ENCODE measurements at regions of chr16 and their contacts with region 1.

Region 1: DNA sequence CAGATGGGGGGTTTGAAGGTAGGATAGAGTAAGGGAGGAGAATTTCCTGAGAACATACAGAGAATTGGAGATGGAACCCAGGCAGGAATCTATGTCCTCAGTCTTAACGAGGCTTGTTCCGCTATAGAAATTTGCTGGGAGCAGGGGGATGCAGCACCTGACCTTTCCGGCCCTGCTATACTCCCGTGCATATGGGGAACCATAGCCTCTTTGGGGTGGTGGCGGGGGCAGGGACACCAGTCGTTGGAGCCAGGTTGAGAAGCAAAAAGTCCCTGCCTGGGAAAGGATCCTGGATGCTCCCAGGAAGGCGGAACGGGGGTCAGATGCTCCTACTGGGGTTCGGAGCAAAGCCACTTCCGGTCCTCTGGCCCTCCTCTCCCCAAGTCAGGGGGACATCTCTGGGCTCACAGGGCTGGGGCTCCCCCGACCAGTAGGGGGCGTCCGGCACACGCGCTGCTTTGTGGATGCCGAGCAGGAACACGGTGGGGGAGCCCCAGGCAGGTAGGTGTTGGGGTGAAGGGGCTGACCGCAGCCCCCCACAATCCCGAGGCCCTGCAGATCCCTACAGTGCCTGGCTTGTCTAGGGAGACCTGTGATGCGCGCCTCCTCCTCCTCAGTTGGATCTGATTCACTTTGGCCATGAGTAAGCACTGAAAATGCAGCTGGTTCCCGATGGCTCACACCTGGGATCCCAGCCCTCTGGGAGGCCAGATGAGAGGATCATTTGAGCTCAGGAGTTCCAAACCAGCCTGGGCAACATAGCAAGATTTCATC is 15.5 kb upstream of the TFAP4 start:
- DNase-seq: peak; percentile 84
- H3K4me3 ChIP-seq: no peak overlapping the region
- H3K27ac ChIP-seq: no peak overlapping the region
- H3K4me1 ChIP-seq: peaks cover 25% of the 10 kb centered on the region
- H3K27me3 ChIP-seq: no peaks in the 10 kb centered on the region
- CTCF ChIP-seq: peak; percentile 52 to 91

Region 2: GRCh38 chr16:4298761-4299522 is 10.6 kb after region 1 on chr16:
- CTCF ChIA-PET with region 1: interaction called, 3 read pairs
- dilution Hi-C with region 1: no loop called
- in situ Hi-C with region 1: no loop called
- intact Hi-C with region 1: loop called (anchors 1 kb)
- DNase-seq: peak; percentile 88
- H3K4me3 ChIP-seq: peak overlapping the region in 1 of 3 experiments; percentile 19
- H3K27ac ChIP-seq: peak overlapping the region; percentile 61
- H3K4me1 ChIP-seq: peaks cover 30% of the 10 kb centered on the region
- H3K27me3 ChIP-seq: no peaks in the 10 kb centered on the region
- CTCF ChIP-seq: peak in 1 of 2 donors; percentile 10

Region 3: DNA sequence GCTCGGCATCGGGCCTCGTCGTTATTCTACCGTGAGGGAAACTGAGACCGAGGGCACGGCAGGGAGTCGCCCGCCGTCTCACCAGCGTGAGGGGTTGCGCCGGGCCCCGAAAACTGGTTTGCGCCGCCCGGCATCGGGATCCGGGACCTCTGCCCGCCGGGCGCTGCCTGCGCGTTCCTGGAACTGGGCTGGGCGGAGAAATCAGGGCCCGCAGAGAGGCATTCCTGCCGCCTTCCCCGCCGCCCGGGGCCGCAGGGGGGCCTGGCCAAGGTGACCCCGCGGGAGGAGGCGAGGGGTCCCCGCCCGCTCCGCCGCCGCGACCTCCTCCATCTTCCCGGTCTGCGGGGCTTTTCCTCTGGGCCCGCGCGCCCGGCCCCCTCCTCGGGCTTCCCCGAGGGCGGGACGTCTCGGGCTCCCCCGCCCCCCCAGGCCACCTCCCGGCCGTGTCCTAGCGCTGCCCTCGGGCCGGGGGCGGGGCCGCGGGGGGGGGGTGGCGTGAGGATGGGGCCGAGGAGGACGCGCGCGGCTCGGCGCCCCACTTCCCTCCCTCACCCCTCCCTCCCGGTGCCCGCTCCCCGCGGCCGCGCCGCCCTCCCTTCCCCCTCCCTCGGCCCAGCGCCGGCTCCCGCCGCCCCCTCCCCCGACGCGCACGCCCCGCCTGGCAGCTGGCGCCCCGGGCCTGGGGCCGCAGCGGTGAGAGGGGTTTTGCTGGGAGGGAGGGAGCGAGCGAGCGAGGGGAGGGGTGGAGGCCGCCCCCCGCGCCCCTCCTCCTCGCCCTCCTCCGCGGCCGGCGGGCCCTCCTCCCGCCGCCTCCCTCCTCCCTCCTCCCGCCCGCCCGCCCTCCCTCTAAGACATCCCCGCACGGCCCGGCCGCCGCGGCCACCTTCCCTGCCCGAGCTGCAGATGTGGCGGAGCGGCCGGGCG is 27.1 kb after region 1 on chr16 and contains the start of gene GLIS2:
- CTCF ChIA-PET with region 1: interaction called, 9 read pairs
- dilution Hi-C with region 1: no loop called
- in situ Hi-C with region 1: no loop called
- intact Hi-C with region 1: loop called (anchors 2 kb)
- DNase-seq: peak; percentile 59
- H3K4me3 ChIP-seq: peak within 1 kb of the TSS; percentile 59 to 81 (median 64)
- H3K27ac ChIP-seq: peak within 1 kb of the TSS; percentile 29
- H3K4me1 ChIP-seq: peaks cover 40% of the 10 kb centered on the region
- H3K27me3 ChIP-seq: no peaks in the 10 kb centered on the region
- CTCF ChIP-seq: no peak
- total RNA-seq, gene GLIS2: 3.3 to 13.5 TPM

Region 4: GRCh38 chr16:4330277-4330874 is 42.0 kb after region 1 on chr16:
- CTCF ChIA-PET with region 1: no interaction called
- dilution Hi-C with region 1: no loop called
- in situ Hi-C with region 1: no loop called
- intact Hi-C with region 1: loop called (anchors 1 kb)
- DNase-seq: peak; percentile 32
- H3K4me3 ChIP-seq: no peak overlapping the region
- H3K27ac ChIP-seq: no peak overlapping the region
- H3K4me1 ChIP-seq: peaks cover 10% of the 10 kb centered on the region
- H3K27me3 ChIP-seq: no peaks in the 10 kb centered on the region
- CTCF ChIP-seq: peak; percentile 79 to 95

Region 5: GRCh38 chr16:4344983-4345835 is 56.9 kb after region 1 on chr16:
- CTCF ChIA-PET with region 1: no interaction called
- dilution Hi-C with region 1: loop called (anchors 5 kb)
- in situ Hi-C with region 1: no loop called
- intact Hi-C with region 1: no loop called
- DNase-seq: no peak
- H3K4me3 ChIP-seq: no peak overlapping the region
- H3K27ac ChIP-seq: no peak overlapping the region
- H3K4me1 ChIP-seq: no peaks in the 10 kb centered on the region
- H3K27me3 ChIP-seq: no peaks in the 10 kb centered on the region
- CTCF ChIP-seq: no peak